PC-3 (cell line): ENCODE measurements at regions of chr1 and their contacts with region 1.

Region 1: GRCh38 chr1:56363007-56363770 is 216.2 kb downstream of the PLPP3 start:
- DNase-seq: peak; percentile 70
- ATAC-seq: peak; percentile 98
- H3K4me3 ChIP-seq: no peak overlapping the region
- H3K27ac ChIP-seq: peak overlapping the region; percentile 32
- H3K4me1 ChIP-seq: peaks cover 22% of the 10 kb centered on the region
- H3K27me3 ChIP-seq: no peaks in the 10 kb centered on the region
- CTCF ChIP-seq: no peak

Region 2: GRCh38 chr1:56019471-56019870 is 343.7 kb before region 1 on chr1:
- CTCF ChIA-PET with region 1: no interaction called
- POLR2A ChIA-PET with region 1: interaction called, 10 read pairs
- intact Hi-C with region 1: no loop called
- DNase-seq: peak; percentile 49
- ATAC-seq: peak; percentile 61; the same call in 1 of the 2 replicates
- H3K4me3 ChIP-seq: no peak overlapping the region
- H3K27ac ChIP-seq: no peak overlapping the region
- H3K4me1 ChIP-seq: peaks cover 9% of the 10 kb centered on the region; the same call in 1 of the 2 replicates
- H3K27me3 ChIP-seq: no peaks in the 10 kb centered on the region
- CTCF ChIP-seq: no peak

Region 3: DNA sequence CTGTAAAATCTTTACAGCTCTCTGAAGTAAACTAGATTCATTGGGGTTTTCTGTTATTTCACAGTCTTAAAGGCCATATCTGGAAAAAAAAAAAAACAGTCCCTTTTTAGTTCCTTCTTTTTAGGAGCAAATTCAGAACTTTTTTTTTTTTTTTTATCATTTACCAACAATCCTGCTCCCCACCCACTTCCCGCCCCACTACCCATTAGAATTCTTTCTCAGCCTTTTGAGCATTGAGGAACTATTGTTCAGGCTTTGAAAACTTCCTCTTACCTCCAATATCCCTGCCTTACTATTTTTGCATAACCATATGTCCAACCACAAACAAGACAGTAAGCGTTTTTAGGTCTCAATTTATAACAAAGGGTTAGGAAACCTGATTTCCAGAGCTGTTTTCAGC is 114.0 kb before region 1 on chr1:
- CTCF ChIA-PET with region 1: no interaction called
- POLR2A ChIA-PET with region 1: interaction called, 12 read pairs
- intact Hi-C with region 1: no loop called
- DNase-seq: no peak
- ATAC-seq: no peak
- H3K4me3 ChIP-seq: no peak overlapping the region
- H3K27ac ChIP-seq: no peak overlapping the region
- H3K4me1 ChIP-seq: no peaks in the 10 kb centered on the region
- H3K27me3 ChIP-seq: no peaks in the 10 kb centered on the region
- CTCF ChIP-seq: no peak